Dendritic cell treated with granulocyte-macrophage colony-stimulating factor and Interleukin-4, amounts not matched to agents 40 ng/mL and 50 ng/mL, for 4 days (primary cell): ENCODE measurements at regions of chr17 and their contacts with region 1.

Region 1: GRCh38 chr17:10844621-10845387 is 6.9 kb upstream of the PIRT start:
- H3K4me3 Mint-ChIP-seq: peak overlapping the region; percentile 76
- H3K27ac Mint-ChIP-seq: peak overlapping the region; percentile 17
- H3K4me1 Mint-ChIP-seq: peaks cover 7% of the 10 kb centered on the region
- H3K27me3 Mint-ChIP-seq: peaks cover 13% of the 10 kb centered on the region

Region 2: GRCh38 chr17:10646392-10646990 is 198.3 kb before region 1 on chr17:
- intact Hi-C with region 1: loop called (anchors 1 kb)
- H3K4me3 Mint-ChIP-seq: no peak overlapping the region
- H3K27ac Mint-ChIP-seq: no peak overlapping the region
- H3K4me1 Mint-ChIP-seq: no peaks in the 10 kb centered on the region
- H3K27me3 Mint-ChIP-seq: no peaks in the 10 kb centered on the region

Region 3: DNA sequence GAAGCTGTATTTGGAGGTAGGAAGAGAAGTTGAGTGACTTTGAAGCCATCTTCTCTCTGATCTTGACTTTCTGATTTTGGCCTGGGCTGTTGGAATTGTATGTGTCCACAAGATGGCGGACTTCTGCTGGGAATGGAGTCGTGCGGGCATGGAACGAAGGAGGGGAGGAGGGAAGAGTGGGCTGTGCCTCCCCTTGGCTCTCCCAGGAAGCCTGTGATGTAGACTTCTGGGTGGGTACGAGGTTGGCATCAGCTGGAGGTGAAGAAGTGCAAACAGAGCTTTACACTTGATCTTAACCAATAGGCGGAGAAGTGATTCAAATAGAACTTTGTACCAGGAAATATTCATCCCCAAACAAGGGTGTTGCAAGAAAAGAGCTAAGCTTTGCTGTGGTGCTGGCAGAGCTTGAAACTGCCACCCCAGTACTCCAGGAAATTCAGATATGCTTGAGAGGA is 107.6 kb before region 1 on chr17:
- intact Hi-C with region 1: loop called (anchors 2 kb)
- H3K4me3 Mint-ChIP-seq: no peak overlapping the region
- H3K27ac Mint-ChIP-seq: no peak overlapping the region
- H3K4me1 Mint-ChIP-seq: peaks cover 6% of the 10 kb centered on the region
- H3K27me3 Mint-ChIP-seq: peaks cover 3% of the 10 kb centered on the region

Region 4: GRCh38 chr17:10772425-10773380 is 72.1 kb before region 1 on chr17:
- intact Hi-C with region 1: loop called (anchors 1 kb)
- H3K4me3 Mint-ChIP-seq: no peak overlapping the region
- H3K27ac Mint-ChIP-seq: no peak overlapping the region
- H3K4me1 Mint-ChIP-seq: peaks cover 5% of the 10 kb centered on the region
- H3K27me3 Mint-ChIP-seq: no peaks in the 10 kb centered on the region